ENCODE measurements at regions of chr12 and their contacts with region 1.

Region 1: DNA sequence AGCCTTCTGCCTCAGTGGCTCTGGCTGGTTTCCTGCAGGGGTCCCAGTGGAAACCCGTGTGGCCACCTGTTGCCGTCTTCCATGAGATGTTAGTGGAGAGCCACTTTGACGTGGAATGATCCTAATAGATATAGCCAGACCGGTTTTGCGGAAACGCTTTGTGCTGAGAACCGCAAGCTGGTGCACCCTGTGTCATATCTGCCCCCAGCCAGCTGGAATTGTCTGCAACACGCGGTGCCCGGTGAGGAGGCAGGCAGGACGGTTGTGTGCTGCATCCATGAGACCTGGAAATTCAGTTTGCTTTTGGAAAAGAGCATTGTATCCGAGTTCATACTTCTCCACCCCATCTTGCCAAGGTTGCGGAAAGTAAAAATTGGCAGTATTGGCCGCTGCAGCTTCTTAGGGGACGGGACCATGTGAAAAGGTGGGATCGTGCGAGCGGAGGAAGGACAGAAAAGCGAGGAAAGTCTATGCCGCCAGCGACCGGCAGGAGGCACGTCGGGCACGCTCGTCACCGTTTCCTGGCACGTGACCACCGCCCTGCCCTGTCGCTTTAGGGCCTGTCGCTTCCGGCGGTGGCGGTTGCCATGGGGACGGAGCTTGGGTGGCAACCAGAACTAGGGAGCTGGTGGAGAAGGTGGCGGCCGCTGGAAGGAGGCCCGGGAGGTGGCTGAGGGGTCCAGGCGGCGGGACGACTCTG is at the start of gene CFAP251:
- DNase-seq: peak; percentile 98
- H3K4me3 ChIP-seq: peak within 1 kb of the TSS; percentile 56
- H3K27ac ChIP-seq: peak within 1 kb of the TSS; percentile 81
- H3K4me1 ChIP-seq: peaks cover 37% of the 10 kb centered on the region
- H3K27me3 ChIP-seq: no peaks in the 10 kb centered on the region
- CTCF ChIP-seq: peak; percentile 72
- total RNA-seq, gene CFAP251: 5.5 and 7.5 TPM in 2 replicates

Region 2: GRCh38 chr12:120725659-120726509 is 1192.2 kb before region 1 on chr12 and contains the start of gene ACADS:
- CTCF ChIA-PET with region 1: no interaction called
- POLR2A ChIA-PET with region 1: no interaction called
- intact Hi-C with region 1: no loop called
- DNase-seq: peak; percentile 91
- H3K4me3 ChIP-seq: peak within 1 kb of the TSS; percentile 51
- H3K27ac ChIP-seq: peak within 1 kb of the TSS; percentile 38
- H3K4me1 ChIP-seq: peaks cover 6% of the 10 kb centered on the region
- H3K27me3 ChIP-seq: no peaks in the 10 kb centered on the region
- CTCF ChIP-seq: no peak
- total RNA-seq, gene ACADS: 3.4 and 5.7 TPM in 2 replicates

Region 3: GRCh38 chr12:121578230-121579189 is 339.6 kb before region 1 on chr12:
- CTCF ChIA-PET with region 1: no interaction called
- POLR2A ChIA-PET with region 1: no interaction called
- intact Hi-C with region 1: no loop called
- DNase-seq: no peak
- H3K4me3 ChIP-seq: peak overlapping the region; percentile 80
- H3K27ac ChIP-seq: peak overlapping the region; percentile 88
- H3K4me1 ChIP-seq: peaks cover 45% of the 10 kb centered on the region
- H3K27me3 ChIP-seq: no peaks in the 10 kb centered on the region
- CTCF ChIP-seq: 0 out of 2 replicates have a peak, but pooled peaks have one; percentile 17

Region 4: DNA sequence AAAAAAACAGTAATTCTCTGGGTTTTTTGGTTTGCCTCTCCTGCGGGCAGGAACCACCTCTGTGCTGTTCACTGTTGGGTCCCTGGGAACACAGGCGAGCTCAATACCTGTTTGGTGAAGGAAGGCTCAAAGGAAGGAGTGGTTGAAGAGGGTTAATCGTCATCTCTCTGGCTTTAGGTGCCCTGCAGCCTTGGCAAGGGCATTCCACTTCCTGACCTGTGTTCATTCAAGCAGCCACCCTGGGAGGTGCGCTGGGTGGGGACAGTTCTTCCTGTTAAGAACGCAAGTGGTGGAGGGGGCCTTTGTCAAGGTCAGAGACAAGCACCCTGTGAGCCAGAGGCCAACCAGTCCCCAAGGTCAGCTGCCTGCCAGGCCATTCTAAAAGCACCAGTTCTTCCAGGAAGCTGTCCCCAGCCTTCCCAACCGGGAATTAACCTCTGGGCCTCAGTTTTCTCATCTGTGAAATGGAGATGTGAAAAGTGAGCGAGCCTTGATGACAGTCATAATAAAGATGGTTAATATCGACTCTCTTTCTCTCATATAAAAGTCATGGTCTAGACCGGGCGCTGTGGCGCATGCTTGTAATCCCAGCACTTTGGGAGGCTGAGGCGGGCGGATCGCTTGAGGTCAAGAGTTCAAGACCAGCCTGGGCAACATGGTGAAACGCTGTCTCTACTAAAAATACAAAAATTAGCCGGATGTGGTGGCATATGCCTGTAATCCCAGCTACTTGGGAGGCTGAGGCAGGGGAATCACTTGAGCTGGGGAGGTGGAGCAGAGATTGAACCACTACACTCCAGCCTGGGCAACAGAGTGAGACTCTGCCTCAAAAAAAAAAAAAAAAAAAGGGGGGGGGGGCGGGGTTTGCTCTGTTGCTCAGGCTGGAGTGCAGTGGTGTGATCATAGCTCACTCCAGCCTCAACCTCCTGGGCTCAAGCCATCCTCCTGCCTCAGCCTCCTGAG is 130.8 kb before region 1 on chr12:
- CTCF ChIA-PET with region 1: interaction called, 11 read pairs
- POLR2A ChIA-PET with region 1: no interaction called
- intact Hi-C with region 1: no loop called
- DNase-seq: no peak
- H3K4me3 ChIP-seq: no peak overlapping the region
- H3K27ac ChIP-seq: no peak overlapping the region
- H3K4me1 ChIP-seq: peaks cover 3% of the 10 kb centered on the region
- H3K27me3 ChIP-seq: no peaks in the 10 kb centered on the region
- CTCF ChIP-seq: no peak

Region 5: GRCh38 chr12:122123051-122123760 is 205.1 kb after region 1 on chr12:
- CTCF ChIA-PET with region 1: interaction called, 3 read pairs
- POLR2A ChIA-PET with region 1: no interaction called
- intact Hi-C with region 1: loop called (anchors 1 kb)
- DNase-seq: peak; percentile 82
- H3K4me3 ChIP-seq: no peak overlapping the region
- H3K27ac ChIP-seq: no peak overlapping the region
- H3K4me1 ChIP-seq: peaks cover 15% of the 10 kb centered on the region
- H3K27me3 ChIP-seq: no peaks in the 10 kb centered on the region
- CTCF ChIP-seq: peak; percentile 84

Measured in A673 (cell line).